ENCODE measurements at regions of chr17 and their contacts with region 1.

Region 1: GRCh38 chr17:73401911-73402310 is 90.1 kb upstream of the CDC42EP4 start:
- DNase-seq: peak; percentile 6
- H3K4me3 ChIP-seq: no peak overlapping the region
- CTCF ChIP-seq: no peak

Region 2: DNA sequence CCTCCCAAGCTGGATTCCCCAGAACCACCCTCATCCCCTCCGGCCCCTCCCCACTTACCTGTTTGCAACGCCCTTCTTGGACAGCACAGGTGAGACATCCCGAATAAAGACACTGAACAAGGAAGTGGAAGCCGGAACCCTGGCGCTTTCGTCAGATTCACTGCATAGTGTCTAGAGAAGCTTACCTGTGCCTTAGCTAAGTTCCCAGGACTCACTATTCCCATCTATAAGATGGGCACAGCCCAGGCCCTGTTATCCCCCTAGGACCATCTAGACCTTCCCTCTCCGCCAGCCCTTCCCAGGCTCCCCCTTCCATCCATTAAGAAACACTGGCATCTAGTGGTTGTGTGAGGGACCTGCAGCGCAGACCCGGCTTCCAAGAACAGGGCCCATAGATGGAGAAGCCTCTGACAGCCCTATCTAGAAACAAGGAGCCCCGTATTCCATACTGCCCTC is 774.7 kb after region 1 on chr17:
- in situ Hi-C with region 1: loop called (anchors 25 kb)
- DNase-seq: peak; percentile 34
- H3K4me3 ChIP-seq: no peak overlapping the region
- CTCF ChIP-seq: peak; percentile 93

Measured in astrocyte of the cerebellum (primary cell).